Activated CD4-positive, alpha-beta T cell treated with anti-CD3 and anti-CD28 coated beads, Interleukin-2, amount 10 ng/mL, durations not matched to agents 24 days and 14 days (primary cell): ENCODE measurements at regions of chr1 and their contacts with region 1.

Region 1: DNA sequence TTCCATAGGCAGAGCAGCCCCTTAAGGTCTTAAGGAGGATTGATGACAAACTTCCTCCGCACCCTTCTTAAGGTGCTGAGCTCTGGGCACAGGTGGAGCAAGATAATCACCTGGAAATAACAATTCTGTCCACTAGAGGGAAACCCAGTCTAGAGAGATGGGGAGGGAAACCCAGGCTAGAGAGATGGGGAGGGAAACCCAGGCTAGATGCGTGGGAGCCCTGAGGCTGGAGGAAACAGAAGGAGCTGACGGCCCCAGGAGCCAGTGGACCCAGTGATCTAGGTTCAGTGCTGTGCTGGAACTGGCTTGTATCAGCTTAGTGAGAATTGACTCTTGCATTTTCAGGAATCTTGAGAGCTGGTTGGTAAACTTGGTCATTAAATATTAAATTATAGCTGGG is 17.8 kb upstream of the MYCL start:
- DNase-seq: peak; percentile 83
- H3K4me3 Mint-ChIP-seq: no peak overlapping the region
- H3K27ac Mint-ChIP-seq: no peak overlapping the region
- H3K4me1 Mint-ChIP-seq: peaks cover 2% of the 10 kb centered on the region
- H3K27me3 Mint-ChIP-seq: peaks cover 3% of the 10 kb centered on the region

Region 2: GRCh38 chr1:39816415-39817090 is 103.0 kb before region 1 on chr1:
- intact Hi-C with region 1: loop called (anchors 5 kb)
- DNase-seq: peak; percentile 91
- H3K4me3 Mint-ChIP-seq: no peak overlapping the region
- H3K27ac Mint-ChIP-seq: no peak overlapping the region
- H3K4me1 Mint-ChIP-seq: peaks cover 13% of the 10 kb centered on the region
- H3K27me3 Mint-ChIP-seq: peaks cover 10% of the 10 kb centered on the region

Region 3: DNA sequence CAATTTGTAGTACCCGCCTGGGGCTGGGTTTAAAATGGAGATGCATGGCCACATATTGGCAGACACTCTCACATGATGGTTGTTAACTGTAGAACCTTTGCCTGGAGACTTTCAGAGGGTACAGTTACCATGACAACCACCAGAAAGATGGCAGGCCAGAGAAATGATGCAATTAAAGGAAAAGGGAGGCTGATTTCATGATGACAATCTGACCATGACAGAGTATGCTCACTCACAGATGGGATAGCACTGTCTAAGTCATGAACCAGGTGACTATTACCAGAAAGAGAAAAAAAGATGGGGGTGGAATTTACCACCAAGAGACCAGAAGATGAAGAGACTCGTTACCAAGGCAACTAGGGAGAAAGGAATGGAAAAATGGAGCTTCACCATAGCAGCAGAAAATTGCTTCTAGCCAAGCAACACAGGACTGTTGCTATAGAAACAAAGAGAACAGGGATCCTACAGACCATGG is 32.8 kb before region 1 on chr1:
- intact Hi-C with region 1: no loop called
- DNase-seq: no peak
- H3K4me3 Mint-ChIP-seq: no peak overlapping the region
- H3K27ac Mint-ChIP-seq: no peak overlapping the region
- H3K4me1 Mint-ChIP-seq: peaks cover 7% of the 10 kb centered on the region
- H3K27me3 Mint-ChIP-seq: peaks cover 15% of the 10 kb centered on the region

Region 4: GRCh38 chr1:39954816-39955546 is 35.4 kb after region 1 on chr1 and contains the start of gene MFSD2A:
- intact Hi-C with region 1: loop called (anchors 1 kb)
- DNase-seq: peak; percentile 95
- H3K4me3 Mint-ChIP-seq: peak within 1 kb of the TSS; percentile 91
- H3K27ac Mint-ChIP-seq: peak within 1 kb of the TSS; percentile 91
- H3K4me1 Mint-ChIP-seq: peaks cover 45% of the 10 kb centered on the region
- H3K27me3 Mint-ChIP-seq: peaks cover 9% of the 10 kb centered on the region
- total RNA-seq, gene MFSD2A: 47.0 and 49.7 TPM in 2 replicates

Region 5: GRCh38 chr1:39973503-39974135 is 54.1 kb after region 1 on chr1:
- intact Hi-C with region 1: loop called (anchors 1 kb)
- DNase-seq: peak; percentile 91
- H3K4me3 Mint-ChIP-seq: no peak overlapping the region
- H3K27ac Mint-ChIP-seq: no peak overlapping the region
- H3K4me1 Mint-ChIP-seq: peaks cover 5% of the 10 kb centered on the region
- H3K27me3 Mint-ChIP-seq: no peaks in the 10 kb centered on the region

Region 6: DNA sequence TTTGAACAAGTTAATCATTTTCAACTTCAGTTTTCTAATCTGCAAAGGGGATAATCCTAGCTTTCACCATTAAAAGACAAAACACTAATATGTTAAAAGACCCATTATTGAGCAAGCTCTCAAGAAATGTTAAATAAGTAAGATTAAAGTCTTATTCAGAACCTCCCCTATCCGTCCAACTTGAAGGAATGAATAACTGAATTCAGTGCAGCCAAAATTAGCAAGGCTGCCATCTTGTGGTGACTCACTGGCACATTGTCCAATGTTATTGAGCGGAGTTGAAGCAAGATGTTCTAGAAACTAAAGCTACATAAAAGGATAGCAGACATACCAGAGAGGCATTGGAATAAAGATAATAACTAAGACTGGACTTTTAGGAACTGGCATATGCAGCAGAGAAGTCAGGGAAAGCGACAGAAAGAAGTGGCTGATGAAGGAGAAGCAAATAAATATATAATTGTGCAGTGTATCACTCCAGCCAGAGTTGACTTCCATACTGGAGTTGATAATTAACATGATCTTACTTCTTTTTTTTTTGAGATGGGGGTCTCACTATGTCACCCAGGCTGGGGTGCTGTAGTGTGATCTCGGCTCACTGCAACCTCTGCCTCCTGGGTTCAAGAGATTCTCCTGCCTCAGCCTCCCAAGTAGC is 112.8 kb after region 1 on chr1:
- intact Hi-C with region 1: loop called (anchors 5 kb)
- DNase-seq: peak; percentile 86
- H3K4me3 Mint-ChIP-seq: no peak overlapping the region
- H3K27ac Mint-ChIP-seq: peak overlapping the region; percentile 3
- H3K4me1 Mint-ChIP-seq: peaks cover 27% of the 10 kb centered on the region
- H3K27me3 Mint-ChIP-seq: peaks cover 15% of the 10 kb centered on the region

Region 7: DNA sequence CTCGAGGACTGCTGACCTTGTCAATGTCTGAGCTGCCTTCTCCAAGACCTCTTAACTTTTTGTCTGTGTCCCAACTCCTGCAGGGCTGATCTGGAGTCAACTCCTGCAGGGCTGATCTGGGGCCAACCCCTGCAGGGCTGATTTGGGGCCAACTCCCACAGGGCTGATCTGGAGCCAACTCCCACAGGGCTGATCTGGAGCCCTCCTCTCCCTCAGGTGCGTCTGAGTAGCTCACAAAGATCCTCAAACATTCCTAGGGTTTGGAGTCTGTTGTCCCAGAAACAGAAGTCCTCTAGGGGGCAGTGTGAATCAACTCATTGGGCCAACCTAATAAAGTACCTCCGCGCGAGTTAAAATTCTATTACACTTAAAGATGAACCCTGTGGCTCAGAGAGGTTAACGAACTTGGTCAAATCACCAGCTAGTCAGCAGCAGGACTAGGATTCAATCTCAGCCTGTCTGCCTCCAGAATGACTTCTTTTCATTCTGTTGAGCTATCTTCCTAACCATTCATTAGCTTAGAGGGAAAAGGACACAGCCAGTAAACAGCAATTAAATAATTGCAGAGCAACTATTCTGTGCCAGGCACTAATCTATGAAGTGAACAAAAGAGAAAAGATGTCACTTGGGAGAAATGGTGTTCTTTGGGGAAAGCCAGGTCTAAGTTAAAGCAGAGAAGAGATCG is 224.5 kb after region 1 on chr1:
- intact Hi-C with region 1: no loop called
- DNase-seq: peak; percentile 88
- H3K4me3 Mint-ChIP-seq: no peak overlapping the region
- H3K27ac Mint-ChIP-seq: no peak overlapping the region
- H3K4me1 Mint-ChIP-seq: peaks cover 19% of the 10 kb centered on the region
- H3K27me3 Mint-ChIP-seq: peaks cover 54% of the 10 kb centered on the region